Head of caudate nucleus (tissue), 42 donors: ENCODE measurements at regions of chr4 and their contacts with region 1.

Region 1: GRCh38 chr4:54217642-54218495 is 11.2 kb upstream of the PDGFRA start:
- DNase-seq: peak; percentile 41 to 90 (median 72)

Region 2: GRCh38 chr4:53929955-53930798 is 287.7 kb before region 1 on chr4:
- intact Hi-C with region 1: loop called (anchors 5 kb)
- DNase-seq: peak; percentile 33 to 92 (median 78)

Region 3: GRCh38 chr4:54090804-54091623 is 126.9 kb before region 1 on chr4:
- intact Hi-C with region 1: no loop called
- DNase-seq: peak in 13 of 42 donors; percentile 7 to 53 (median 36)

Region 4: DNA sequence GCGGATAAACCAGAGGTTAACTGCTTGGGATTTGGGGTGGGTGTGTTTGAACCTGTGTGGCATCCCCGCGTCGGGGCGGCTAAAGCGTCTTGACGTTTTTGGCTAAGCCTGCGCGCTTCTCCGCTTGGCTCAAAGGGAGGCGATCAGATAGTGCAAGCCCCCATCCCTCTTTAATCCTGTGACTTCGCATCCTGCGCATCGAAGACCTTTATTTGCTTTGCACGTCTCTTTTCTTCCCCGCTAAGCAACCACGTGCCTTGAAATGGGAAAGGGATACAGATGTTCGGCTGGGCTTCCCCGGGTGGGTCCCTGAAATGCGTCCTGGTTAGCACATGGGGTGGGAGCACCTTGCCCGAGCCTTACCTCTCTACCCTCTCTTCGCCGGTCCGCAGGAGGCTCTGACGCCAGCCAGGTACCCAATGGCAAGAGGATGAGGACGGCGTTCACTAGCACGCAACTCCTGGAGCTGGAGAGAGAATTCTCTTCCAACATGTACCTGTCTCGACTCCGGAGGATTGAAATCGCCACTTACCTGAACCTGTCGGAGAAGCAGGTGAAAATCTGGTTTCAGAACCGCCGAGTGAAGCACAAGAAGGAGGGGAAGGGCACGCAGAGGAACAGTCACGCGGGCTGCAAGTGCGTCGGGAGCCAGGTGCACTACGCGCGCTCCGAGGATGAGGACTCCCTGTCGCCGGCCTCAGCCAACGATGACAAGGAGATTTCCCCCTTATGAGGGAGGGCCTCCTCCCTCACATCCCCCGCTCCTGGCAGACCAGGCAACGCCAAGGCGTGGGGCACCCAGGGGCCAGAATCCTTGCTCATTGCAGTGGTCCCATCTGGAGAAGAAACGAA is 116.5 kb before region 1 on chr4:
- intact Hi-C with region 1: no loop called
- DNase-seq: no peak